Activated CD8-positive, alpha-beta T cell treated with anti-CD3 and anti-CD28 coated beads for 36 hours (primary cell): ENCODE measurements at regions of chr6 and their contacts with region 1.

Region 1: DNA sequence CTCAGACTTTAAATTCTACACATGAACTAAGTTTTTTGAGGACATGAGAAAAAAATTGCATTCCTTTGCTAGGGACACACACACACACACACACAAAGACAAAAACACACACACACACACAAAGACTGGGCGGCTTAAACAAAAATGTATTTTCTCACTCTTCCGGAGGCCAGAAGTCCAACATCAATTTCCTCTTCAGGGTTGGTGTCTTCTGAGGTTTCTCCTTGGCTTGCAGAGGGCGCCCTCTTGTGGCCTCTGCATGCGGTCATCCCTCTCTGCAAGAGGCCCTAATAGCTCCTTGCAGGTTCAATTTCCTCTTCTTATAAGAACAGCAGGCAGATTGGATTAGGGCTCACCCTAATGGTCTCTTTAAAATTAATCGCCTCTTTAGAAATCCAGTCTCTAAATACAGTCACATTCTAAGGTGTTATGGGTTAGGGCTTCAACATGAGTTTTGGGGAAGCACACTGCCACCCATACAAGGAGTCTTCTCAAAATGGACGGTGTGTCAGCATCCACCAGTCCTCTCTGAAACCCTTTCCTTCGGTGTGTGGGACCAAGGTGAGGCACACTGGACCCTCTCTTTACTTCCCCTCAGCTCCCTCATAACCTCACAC is 61.4 kb downstream of the GPR6 start:
- DNase-seq: peak; percentile 93
- ATAC-seq: peak; percentile 85
- H3K4me3 Mint-ChIP-seq: peak overlapping the region; percentile 78
- H3K27ac Mint-ChIP-seq: peak overlapping the region; percentile 96
- H3K4me1 Mint-ChIP-seq: peaks cover 19% of the 10 kb centered on the region
- H3K27me3 Mint-ChIP-seq: no peaks in the 10 kb centered on the region
- CTCF ChIP-seq: peak; percentile 55

Region 2: GRCh38 chr6:109521080-109521479 is 518.4 kb before region 1 on chr6:
- CTCF ChIA-PET with region 1: interaction called, 57 read pairs
- POLR2A ChIA-PET with region 1: interaction called, 3 read pairs
- intact Hi-C with region 1: no loop called
- DNase-seq: no peak
- ATAC-seq: no peak
- H3K4me3 Mint-ChIP-seq: no peak overlapping the region
- H3K27ac Mint-ChIP-seq: no peak overlapping the region
- H3K4me1 Mint-ChIP-seq: peaks cover 14% of the 10 kb centered on the region
- H3K27me3 Mint-ChIP-seq: no peaks in the 10 kb centered on the region
- CTCF ChIP-seq: no peak

Region 3: DNA sequence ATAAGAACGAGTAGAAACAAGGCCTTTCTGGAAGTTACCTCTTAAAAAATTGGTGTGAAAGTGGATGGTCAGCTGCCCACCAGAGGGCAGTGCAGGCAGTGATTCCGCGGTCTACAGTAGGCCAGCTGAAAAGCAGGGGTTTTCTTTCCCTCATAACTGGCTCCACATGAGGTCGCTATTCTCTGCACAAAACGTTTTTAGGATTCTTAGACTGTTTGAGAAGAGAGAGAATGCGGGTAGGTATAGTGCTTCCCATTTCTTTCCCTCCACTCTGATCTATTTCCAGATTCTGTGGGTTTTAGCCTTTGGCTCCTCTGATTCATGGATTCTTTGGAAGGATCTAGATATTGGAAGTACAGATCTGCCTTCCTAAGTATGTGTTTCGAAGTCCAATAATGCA is 334.2 kb before region 1 on chr6:
- CTCF ChIA-PET with region 1: interaction called, 143 read pairs
- POLR2A ChIA-PET with region 1: no interaction called
- intact Hi-C with region 1: loop called (anchors 1 kb)
- DNase-seq: peak; percentile 90
- ATAC-seq: peak; percentile 98
- H3K4me3 Mint-ChIP-seq: no peak overlapping the region
- H3K27ac Mint-ChIP-seq: no peak overlapping the region
- H3K4me1 Mint-ChIP-seq: peaks cover 15% of the 10 kb centered on the region
- H3K27me3 Mint-ChIP-seq: no peaks in the 10 kb centered on the region
- CTCF ChIP-seq: peak; percentile 99

Region 4: DNA sequence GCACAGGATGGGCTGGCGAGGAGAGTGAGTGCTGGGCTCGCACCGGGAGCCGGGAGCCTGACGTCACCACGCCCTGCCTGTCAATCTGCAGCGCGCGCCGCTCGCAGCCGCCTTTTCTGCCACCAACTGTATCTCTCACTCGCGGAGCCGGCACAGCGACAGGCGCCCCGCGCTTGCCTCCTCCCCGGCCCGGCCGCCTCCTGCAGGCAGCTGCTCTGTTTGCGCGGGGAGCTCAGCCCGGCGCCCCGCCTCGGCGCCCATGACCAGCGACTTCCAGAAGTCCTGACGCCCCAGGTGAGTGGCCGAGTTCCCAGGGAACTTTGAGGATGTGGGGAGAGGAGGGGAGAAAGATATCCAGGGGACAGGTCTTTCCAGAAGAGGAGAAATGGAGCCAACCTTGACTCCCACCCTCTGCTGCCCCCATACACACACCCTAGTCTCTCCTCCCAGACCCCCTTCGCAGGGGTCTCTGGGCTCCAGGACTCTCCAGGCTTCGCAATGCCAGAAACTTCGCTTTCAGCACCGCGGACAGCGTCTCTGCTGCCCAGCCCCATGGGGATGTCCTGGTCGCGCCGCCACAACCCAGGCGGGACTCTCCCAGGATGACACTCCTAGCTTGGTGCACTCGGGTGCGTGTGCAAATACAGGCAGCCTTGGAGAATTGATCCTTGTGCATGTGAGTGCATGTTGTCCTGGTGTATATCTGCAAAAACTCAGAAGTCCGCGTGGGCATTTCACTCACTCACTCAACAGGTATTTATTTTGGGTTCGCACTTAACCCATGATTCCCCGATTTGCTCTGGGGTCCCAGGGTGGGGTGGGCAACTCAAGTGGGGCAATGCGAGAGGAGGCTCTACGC is 61.1 kb before region 1 on chr6 and contains the start of gene GPR6:
- CTCF ChIA-PET with region 1: interaction called, 12 read pairs
- POLR2A ChIA-PET with region 1: no interaction called
- intact Hi-C with region 1: no loop called
- DNase-seq: peak; percentile 69
- ATAC-seq: peak; percentile 77
- H3K4me3 Mint-ChIP-seq: no peak within 1 kb of the TSS
- H3K27ac Mint-ChIP-seq: no peak within 1 kb of the TSS
- H3K4me1 Mint-ChIP-seq: no peaks in the 10 kb centered on the region
- H3K27me3 Mint-ChIP-seq: peaks cover 46% of the 10 kb centered on the region
- CTCF ChIP-seq: no peak
- total RNA-seq, gene GPR6: not detected

Region 5: DNA sequence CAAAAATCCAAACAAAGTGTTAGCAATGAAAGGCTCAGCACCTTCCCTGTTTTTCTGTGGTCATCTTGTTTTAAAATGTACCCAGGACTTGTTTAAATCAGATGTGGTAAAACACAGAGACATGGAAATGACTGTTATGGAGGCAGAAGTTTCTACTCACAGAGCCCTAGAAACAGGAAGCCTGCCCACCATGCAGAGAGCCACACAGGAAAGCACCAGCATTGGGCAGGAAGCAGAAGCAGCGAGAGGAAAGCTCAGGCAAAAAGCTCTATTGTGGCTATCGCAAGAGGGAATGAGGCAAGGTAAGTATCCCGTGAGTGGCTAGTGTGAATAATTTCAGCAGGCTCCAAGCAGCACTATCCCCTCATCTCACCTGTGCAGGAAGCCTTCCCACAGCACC is 18.6 kb before region 1 on chr6:
- CTCF ChIA-PET with region 1: interaction called, 12 read pairs
- POLR2A ChIA-PET with region 1: interaction called, 3 read pairs
- intact Hi-C with region 1: no loop called
- DNase-seq: peak; percentile 33
- ATAC-seq: peak; percentile 68
- H3K4me3 Mint-ChIP-seq: no peak overlapping the region
- H3K27ac Mint-ChIP-seq: peak overlapping the region; percentile 48
- H3K4me1 Mint-ChIP-seq: peaks cover 14% of the 10 kb centered on the region
- H3K27me3 Mint-ChIP-seq: no peaks in the 10 kb centered on the region
- CTCF ChIP-seq: no peak

Region 6: DNA sequence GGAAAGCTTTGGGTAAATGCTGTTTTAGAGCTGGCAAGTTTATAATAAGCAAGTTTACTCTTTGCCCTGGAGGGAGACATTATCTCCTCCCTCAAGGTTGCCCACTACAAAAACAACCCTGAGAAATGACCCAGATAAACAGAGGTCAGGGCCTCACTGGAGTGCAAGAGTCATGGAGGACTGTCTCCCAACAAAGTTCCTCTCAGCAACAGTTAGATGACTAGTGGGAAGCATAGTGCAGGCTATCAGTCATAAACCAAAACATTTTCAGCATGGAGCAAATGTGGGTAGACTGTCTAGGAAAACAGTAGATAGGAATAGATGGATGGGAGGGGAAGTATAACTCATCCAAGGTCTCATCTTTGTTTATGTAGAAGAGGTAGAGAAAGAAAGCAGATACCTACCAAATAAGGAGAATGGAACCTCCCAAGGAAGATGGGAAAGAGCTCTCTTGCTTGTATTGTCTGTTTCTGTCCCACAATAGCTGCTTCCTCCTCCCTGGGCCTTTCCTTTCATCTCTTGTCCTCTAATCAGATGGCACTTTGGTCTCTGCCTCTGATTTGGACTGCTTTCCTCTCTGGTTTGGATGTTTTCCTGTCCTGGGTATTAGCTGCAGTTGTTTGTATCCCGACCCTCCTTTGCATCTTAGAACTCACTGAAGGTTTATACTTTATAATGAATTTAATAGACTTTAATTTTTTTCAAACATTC is 44.6 kb after region 1 on chr6:
- CTCF ChIA-PET with region 1: interaction called, 13 read pairs
- POLR2A ChIA-PET with region 1: no interaction called
- intact Hi-C with region 1: no loop called
- DNase-seq: no peak
- ATAC-seq: no peak
- H3K4me3 Mint-ChIP-seq: no peak overlapping the region
- H3K27ac Mint-ChIP-seq: no peak overlapping the region
- H3K4me1 Mint-ChIP-seq: no peaks in the 10 kb centered on the region
- H3K27me3 Mint-ChIP-seq: no peaks in the 10 kb centered on the region
- CTCF ChIP-seq: no peak